B cell (primary cell): ENCODE measurements at regions of chr6 and their contacts with region 1.

Region 1: GRCh38 chr6:31340228-31340627 is 16.8 kb downstream of the HLA-B start:
- DNase-seq: no peak
- ATAC-seq: no peak
- H3K4me3 ChIP-seq: no peak overlapping the region
- H3K4me3 Mint-ChIP-seq: no peak overlapping the region
- H3K27ac ChIP-seq: no peak overlapping the region
- H3K27ac Mint-ChIP-seq: no peak overlapping the region
- H3K4me1 ChIP-seq: peaks cover 0 to 11% of the 10 kb centered on the region in 2 donors
- H3K4me1 Mint-ChIP-seq: no peaks in the 10 kb centered on the region
- H3K27me3 ChIP-seq: no peaks in the 10 kb centered on the region
- H3K27me3 Mint-ChIP-seq: no peaks in the 10 kb centered on the region
- CTCF ChIP-seq: no peak

Region 2: DNA sequence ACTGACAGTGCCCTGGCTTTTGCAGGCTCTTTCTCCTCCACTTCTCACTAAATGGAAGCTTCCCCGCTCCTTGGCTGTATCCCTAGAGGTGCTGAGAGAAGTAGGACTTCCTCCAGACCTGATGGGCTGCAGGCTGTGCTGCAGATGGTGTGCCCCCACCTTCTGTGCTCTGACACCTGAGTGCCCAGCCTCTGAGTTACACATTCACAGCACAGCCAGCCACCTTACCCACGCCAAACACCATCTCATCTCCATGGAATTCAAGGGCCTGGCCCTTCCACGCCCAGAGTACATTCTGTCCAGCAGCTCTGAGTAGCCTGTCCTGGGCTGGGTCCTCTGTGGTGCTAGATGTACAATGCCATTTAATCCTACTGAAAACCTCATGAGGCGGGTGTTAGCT is 413.6 kb before region 1 on chr6:
- CTCF ChIA-PET with region 1: no interaction called
- POLR2A ChIA-PET with region 1: interaction called, 12 read pairs
- intact Hi-C with region 1: no loop called
- DNase-seq: no peak
- ATAC-seq: no peak
- H3K4me3 ChIP-seq: no peak overlapping the region
- H3K4me3 Mint-ChIP-seq: no peak overlapping the region
- H3K27ac ChIP-seq: no peak overlapping the region
- H3K27ac Mint-ChIP-seq: no peak overlapping the region
- H3K4me1 ChIP-seq: no peaks in the 10 kb centered on the region
- H3K4me1 Mint-ChIP-seq: no peaks in the 10 kb centered on the region
- H3K27me3 ChIP-seq: no peaks in the 10 kb centered on the region
- H3K27me3 Mint-ChIP-seq: no peaks in the 10 kb centered on the region
- CTCF ChIP-seq: no peak